ENCODE measurements at regions of chrX and their contacts with region 1.

Region 1: GRCh38 chrX:44997888-44998287 is 124.9 kb downstream of the KDM6A start:
- DNase-seq: no peak
- H3K4me3 Mint-ChIP-seq: peak overlapping the region; percentile 57
- H3K27ac Mint-ChIP-seq: peak overlapping the region; percentile 86
- H3K4me1 Mint-ChIP-seq: peaks cover 42% of the 10 kb centered on the region
- H3K27me3 Mint-ChIP-seq: no peaks in the 10 kb centered on the region

Region 2: GRCh38 chrX:43661521-43662240 is 1336.2 kb before region 1 on chrX:
- intact Hi-C with region 1: no loop called
- DNase-seq: no peak
- H3K4me3 Mint-ChIP-seq: no peak overlapping the region
- H3K27ac Mint-ChIP-seq: no peak overlapping the region
- H3K4me1 Mint-ChIP-seq: no peaks in the 10 kb centered on the region
- H3K27me3 Mint-ChIP-seq: peaks cover 3% of the 10 kb centered on the region

Region 3: GRCh38 chrX:45070116-45071007 is 72.5 kb after region 1 on chrX:
- intact Hi-C with region 1: loop called (anchors 5 kb)
- DNase-seq: no peak
- H3K4me3 Mint-ChIP-seq: no peak overlapping the region
- H3K27ac Mint-ChIP-seq: peak overlapping the region; percentile 63
- H3K4me1 Mint-ChIP-seq: peaks cover 44% of the 10 kb centered on the region
- H3K27me3 Mint-ChIP-seq: no peaks in the 10 kb centered on the region

Measured in activated T-helper 1 cell treated with anti-CD3 and anti-CD28 coated beads, Interleukin-12 subunit alpha, Interleukin-12 subunit beta, Interleukin-2, Interleukin-4 antibody, amounts not matched to agents 30 ng/mL and 10 ng/mL and 1 ng/mL, durations not matched to agents 14 hours and 24 hours and 36 hours (primary cell).